ENCODE measurements at regions of chr2 and their contacts with region 1.

Region 1: DNA sequence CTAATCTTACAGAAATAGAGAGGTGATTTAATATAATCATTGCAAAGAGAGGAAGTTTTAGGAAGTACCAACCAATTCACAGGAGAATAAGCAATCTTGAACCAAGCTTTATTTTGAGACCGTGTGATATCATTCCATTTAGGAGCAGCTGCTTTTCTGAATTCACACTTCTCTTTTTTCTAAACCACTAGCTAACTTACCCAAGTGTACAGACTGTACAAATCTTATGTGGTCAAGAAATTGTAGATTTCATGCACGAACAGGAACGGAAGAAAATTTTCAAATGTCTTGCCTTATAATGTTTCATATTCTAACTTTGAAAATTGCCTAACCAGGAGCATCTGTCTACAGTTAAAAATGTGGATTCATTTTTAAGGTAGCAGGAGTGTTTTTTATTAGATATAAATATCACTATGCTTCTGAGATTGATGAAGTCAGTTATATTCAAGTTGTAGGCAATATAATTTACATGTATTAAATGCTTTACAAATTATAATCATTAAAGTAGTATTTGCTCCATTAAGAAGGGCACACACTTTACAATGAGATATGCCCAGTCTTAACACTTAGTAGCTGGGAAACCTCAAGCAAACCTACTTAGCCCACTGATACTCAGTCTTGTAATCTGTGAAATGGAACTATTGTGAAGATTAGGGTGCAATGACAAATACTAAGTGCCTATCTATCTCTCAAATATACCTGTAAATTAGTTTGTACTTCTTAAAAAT is 302.2 kb upstream of the STON1 start:
- DNase-seq: no peak
- ATAC-seq: no peak
- H3K4me3 ChIP-seq: no peak overlapping the region
- H3K4me3 Mint-ChIP-seq: no peak overlapping the region
- H3K27ac ChIP-seq: no peak overlapping the region
- H3K27ac Mint-ChIP-seq: no peak overlapping the region
- H3K4me1 ChIP-seq: no peaks in the 10 kb centered on the region
- H3K4me1 Mint-ChIP-seq: peaks cover 0 to 8% (median 0%) of the 10 kb centered on the region in 3 donors
- H3K27me3 ChIP-seq: no peaks in the 10 kb centered on the region
- H3K27me3 Mint-ChIP-seq: no peaks in the 10 kb centered on the region

Region 2: GRCh38 chr2:48444404-48444803 is 216.6 kb after region 1 on chr2:
- CTCF ChIA-PET with region 1: no interaction called
- POLR2A ChIA-PET with region 1: interaction called in 1 of 2 experiments, 14 read pairs
- DNase-seq: no peak
- ATAC-seq: no peak
- H3K4me3 ChIP-seq: no peak overlapping the region
- H3K4me3 Mint-ChIP-seq: no peak overlapping the region
- H3K27ac ChIP-seq: no peak overlapping the region
- H3K27ac Mint-ChIP-seq: no peak overlapping the region
- H3K4me1 ChIP-seq: peaks cover 29 to 46% of the 10 kb centered on the region in 2 experiments
- H3K4me1 Mint-ChIP-seq: peaks cover 41 to 42% (median 42%) of the 10 kb centered on the region in 3 donors
- H3K27me3 ChIP-seq: no peaks in the 10 kb centered on the region
- H3K27me3 Mint-ChIP-seq: no peaks in the 10 kb centered on the region